ENCODE measurements at regions of chr15 and their contacts with region 1.

Region 1: DNA sequence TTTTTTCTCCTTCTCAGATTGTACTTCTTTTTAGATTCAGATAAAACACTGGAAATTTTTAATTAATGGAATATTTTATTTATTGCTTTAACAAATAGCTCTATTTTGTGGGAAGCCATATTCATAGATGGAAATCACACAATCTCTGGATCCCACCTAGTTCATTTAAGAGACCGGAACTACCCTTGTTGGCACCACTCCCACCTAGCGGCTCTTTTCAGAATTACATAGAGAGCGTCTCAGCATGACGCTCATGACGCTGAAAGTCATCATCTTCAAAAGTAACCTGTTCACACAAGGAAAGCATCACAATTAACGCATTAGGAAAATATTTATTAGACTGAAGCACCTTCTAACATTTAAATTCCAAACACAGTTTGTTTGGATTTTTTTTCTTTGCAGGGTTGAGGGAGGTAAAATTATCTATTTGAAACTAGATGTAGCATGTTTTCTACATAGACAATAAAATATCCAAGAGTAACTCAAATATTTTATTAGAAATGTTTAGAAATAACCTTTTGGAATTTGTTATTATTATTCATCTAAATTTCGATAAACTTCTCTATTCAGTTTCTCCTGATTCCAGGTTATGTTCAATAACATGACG is 214.9 kb upstream of the ARRDC4 start:
- DNase-seq: peak; percentile 80
- H3K4me3 Mint-ChIP-seq: no peak overlapping the region
- H3K27ac Mint-ChIP-seq: no peak overlapping the region
- H3K4me1 Mint-ChIP-seq: no peaks in the 10 kb centered on the region
- H3K27me3 Mint-ChIP-seq: no peaks in the 10 kb centered on the region
- CTCF ChIP-seq: peak; percentile 80

Region 2: DNA sequence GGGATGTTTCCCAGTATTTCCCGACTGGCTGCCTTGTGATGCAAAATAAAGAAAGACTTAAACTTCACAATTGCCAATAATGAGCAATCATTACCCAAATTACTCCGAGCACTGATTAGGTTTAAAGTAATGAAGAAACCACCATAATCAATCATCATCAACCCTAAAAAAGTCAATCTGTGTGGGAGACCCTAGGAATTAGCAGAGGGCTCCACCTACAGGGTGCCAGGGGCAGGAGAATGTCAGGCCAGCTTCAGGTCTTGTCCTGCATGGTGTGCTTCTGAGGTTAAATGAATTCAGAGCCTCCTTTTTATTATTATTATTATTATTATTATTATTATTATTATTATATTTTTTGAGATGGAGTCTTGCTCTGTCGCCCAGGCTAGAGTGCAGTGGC is 263.0 kb before region 1 on chr15:
- CTCF ChIA-PET with region 1: no interaction called
- intact Hi-C with region 1: loop called (anchors 5 kb)
- DNase-seq: peak; percentile 41
- H3K4me3 Mint-ChIP-seq: no peak overlapping the region
- H3K27ac Mint-ChIP-seq: no peak overlapping the region
- H3K4me1 Mint-ChIP-seq: no peaks in the 10 kb centered on the region
- H3K27me3 Mint-ChIP-seq: no peaks in the 10 kb centered on the region
- CTCF ChIP-seq: no peak

Region 3: DNA sequence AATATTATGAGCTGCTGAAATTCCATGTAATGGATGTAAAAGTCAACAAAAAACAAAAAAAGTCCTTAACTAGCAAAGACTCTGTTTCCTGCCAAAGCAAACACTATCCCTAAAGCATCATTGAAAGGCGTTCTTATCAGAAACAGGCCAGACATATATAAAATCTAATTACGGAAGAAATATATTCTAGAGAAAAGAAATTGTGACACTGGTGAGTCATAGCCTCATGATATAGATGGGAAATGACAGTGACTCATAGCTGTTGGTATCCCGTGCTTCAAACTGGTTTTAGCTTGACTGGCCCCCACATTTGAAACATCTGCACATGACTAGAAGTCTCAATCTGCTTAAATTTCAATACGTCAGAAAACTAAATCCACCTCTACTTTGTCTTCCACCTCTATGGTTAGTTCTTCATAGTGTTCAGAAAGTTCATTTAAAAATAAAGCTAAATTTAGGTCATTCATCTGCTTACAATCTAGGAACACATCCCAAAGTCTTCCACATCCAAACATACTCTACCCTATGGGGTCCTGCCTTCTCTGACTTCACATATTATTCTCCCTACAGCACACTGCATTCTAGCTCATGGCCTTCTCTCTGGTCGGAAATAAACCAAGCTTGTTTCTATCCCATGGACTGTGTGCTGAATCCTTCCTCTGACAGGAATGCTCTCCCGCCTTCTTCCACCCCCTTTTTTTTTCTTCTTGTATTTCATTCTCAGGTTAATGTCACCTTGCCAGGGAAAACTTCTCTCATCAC is 241.4 kb before region 1 on chr15:
- CTCF ChIA-PET with region 1: no interaction called
- intact Hi-C with region 1: loop called (anchors 5 kb)
- DNase-seq: peak; percentile 36
- H3K4me3 Mint-ChIP-seq: no peak overlapping the region
- H3K27ac Mint-ChIP-seq: peak overlapping the region; percentile 81
- H3K4me1 Mint-ChIP-seq: peaks cover 38% of the 10 kb centered on the region
- H3K27me3 Mint-ChIP-seq: no peaks in the 10 kb centered on the region
- CTCF ChIP-seq: no peak

Measured in Calu3 (cell line).